Esophagus squamous epithelium (tissue), 5 donors: ENCODE measurements at regions of chr4 and their contacts with region 1.

Region 1: DNA sequence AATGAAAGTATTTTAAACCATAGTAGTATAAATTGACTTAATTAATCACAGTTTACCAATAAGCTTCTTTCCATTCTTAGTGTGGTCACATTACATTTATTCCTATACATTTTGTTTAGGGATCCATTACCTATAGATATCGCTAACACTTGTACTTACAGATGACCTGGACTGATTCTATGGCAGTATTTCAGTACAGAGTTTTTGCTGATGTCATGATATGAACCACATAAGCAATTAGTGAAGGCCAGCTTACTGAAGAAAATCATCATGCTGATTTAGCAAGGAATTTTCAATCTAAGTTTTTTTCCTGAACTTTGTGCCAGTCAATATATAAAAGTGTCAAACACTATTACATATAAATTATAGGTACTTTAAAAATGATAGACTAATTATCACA is 113.4 kb upstream of the HPGD start:
- DNase-seq: no peak
- H3K4me3 ChIP-seq: no peak overlapping the region
- H3K27ac ChIP-seq: no peak overlapping the region
- H3K4me1 ChIP-seq: peaks cover 0 to 13% (median 0%) of the 10 kb centered on the region in 3 donors
- H3K27me3 ChIP-seq: no peaks in the 10 kb centered on the region
- CTCF ChIP-seq: no peak
- POLR2A ChIP-seq: no peak

Region 2: GRCh38 chr4:174365018-174365587 is 270.6 kb before region 1 on chr4:
- intact Hi-C with region 1: loop called (anchors 5 kb)
- DNase-seq: no peak
- H3K4me3 ChIP-seq: no peak overlapping the region
- H3K27ac ChIP-seq: no peak overlapping the region
- H3K4me1 ChIP-seq: peaks cover 0 to 14% (median 4%) of the 10 kb centered on the region in 3 donors
- H3K27me3 ChIP-seq: no peaks in the 10 kb centered on the region
- CTCF ChIP-seq: peak in 5 of 6 experiments; percentile 10 to 61 (median 37)
- POLR2A ChIP-seq: no peak

Region 3: DNA sequence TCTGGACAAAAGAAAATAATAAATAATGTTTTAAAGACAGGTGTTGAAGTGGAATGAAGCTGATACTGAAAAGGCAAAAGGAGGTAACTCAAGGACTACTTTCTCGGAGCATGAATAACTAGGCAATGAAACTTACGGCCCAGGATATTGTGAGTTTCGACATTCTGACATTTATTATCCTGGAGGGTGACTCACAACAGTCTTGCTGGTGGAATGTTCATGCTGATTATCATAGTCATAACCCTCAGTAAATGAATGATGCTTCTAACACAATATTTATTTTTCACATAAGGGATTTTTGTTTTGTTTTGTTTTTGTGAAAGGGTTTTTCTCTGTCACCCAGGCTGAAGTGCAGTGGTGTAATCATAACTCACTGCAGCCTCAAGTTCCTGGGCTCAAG is 33.5 kb after region 1 on chr4:
- intact Hi-C with region 1: no loop called
- DNase-seq: no peak
- H3K4me3 ChIP-seq: no peak overlapping the region
- H3K27ac ChIP-seq: no peak overlapping the region
- H3K4me1 ChIP-seq: peaks cover 0 to 13% (median 5%) of the 10 kb centered on the region in 3 donors
- H3K27me3 ChIP-seq: no peaks in the 10 kb centered on the region
- CTCF ChIP-seq: no peak
- POLR2A ChIP-seq: no peak